ENCODE measurements at regions of chr12 and their contacts with region 1.

Region 1: DNA sequence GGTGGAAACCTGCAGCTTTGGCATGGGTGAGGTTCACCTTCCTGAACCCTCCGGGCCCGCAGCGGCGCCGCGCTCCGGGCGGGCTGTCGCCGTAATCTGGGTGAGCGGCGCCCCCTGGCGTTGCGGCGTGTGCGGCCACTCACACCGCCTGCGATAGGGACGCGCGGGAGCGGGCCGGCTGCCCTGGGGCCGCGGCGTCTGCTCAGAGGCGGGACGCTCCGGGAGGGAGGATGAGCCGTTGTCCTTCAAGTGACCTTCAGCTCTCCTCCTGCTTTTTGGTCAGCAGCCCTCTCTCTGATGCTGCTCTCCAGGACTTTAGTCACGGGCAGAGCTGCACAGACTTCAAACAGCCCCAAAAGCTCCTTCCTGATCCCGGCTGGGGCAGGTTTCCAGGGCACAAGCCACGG is 211.7 kb upstream of the FKBP4 start:
- DNase-seq: peak; percentile 82
- H3K4me3 ChIP-seq: peak overlapping the region in 1 of 4 donors; percentile 8
- H3K27ac ChIP-seq: peak overlapping the region in 3 of 4 donors; percentile 57 to 72 (median 71)
- H3K4me1 ChIP-seq: peaks cover 0 to 34% (median 23%) of the 10 kb centered on the region in 4 donors
- H3K27me3 ChIP-seq: no peaks in the 10 kb centered on the region
- CTCF ChIP-seq: peak; percentile 71 to 95 (median 86)
- EP300 ChIP-seq: no peak
- POLR2A ChIP-seq: no peak

Region 2: DNA sequence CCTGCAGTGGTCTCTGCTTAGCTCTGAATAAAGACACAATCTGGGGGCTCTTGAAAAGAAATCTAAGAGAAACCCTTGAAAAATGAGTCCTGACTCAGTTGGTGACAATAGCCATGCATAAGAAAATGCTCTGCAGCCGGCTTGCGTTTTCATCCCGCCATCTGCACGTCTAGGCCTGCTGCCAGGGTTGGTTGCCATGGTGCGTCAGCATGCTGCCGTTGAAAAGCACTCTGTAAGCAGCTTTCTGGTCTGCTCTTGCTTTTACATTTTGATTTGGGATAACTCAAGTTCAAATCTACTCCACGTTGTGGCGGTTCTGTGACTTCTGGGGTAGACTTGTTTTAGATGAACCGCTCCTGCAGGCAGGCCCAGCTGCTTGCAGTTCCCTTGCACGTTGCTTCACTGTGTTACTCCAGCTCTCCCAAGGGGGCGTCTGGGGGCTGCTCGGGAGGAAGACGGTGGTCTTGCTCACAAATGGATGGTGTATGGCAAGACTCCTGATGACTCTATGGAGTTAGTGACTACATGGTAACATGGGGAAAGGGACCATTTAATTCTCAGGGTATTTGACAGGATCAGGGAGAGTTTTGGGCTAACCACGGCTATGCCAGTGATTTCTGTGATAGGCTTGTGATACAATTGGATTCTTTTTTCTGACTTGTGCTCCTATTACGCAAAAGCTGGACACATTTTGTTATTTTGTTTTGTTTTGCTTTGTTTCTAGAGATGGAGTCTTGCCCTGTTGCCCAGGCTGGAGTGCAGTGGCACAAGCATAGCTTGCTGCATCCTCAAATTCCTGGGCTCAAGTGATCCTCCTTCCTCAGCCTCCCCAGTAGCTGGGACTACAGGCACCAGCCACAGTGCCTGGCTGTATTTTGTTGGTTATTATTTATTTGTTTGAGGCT is 938.3 kb before region 1 on chr12:
- intact Hi-C with region 1: loop called (anchors 10 kb)
- DNase-seq: peak; percentile 92
- H3K4me3 ChIP-seq: peak overlapping the region in 1 of 4 donors; percentile 8
- H3K27ac ChIP-seq: peak overlapping the region; percentile 42 to 77 (median 64)
- H3K4me1 ChIP-seq: peaks cover 0 to 82% (median 53%) of the 10 kb centered on the region in 4 donors
- H3K27me3 ChIP-seq: no peaks in the 10 kb centered on the region
- CTCF ChIP-seq: no peak
- EP300 ChIP-seq: no peak
- POLR2A ChIP-seq: no peak

Region 3: GRCh38 chr12:1804545-1805332 is 778.4 kb before region 1 on chr12:
- intact Hi-C with region 1: loop called (anchors 2 kb)
- DNase-seq: peak; percentile 93
- H3K4me3 ChIP-seq: no peak overlapping the region
- H3K27ac ChIP-seq: peak overlapping the region in 1 of 4 donors; percentile 27
- H3K4me1 ChIP-seq: peaks cover 0 to 12% (median 2%) of the 10 kb centered on the region in 4 donors
- H3K27me3 ChIP-seq: no peaks in the 10 kb centered on the region
- CTCF ChIP-seq: no peak
- EP300 ChIP-seq: no peak
- POLR2A ChIP-seq: no peak

Region 4: GRCh38 chr12:1939801-1940607 is 643.1 kb before region 1 on chr12:
- intact Hi-C with region 1: loop called (anchors 10 kb)
- DNase-seq: peak; percentile 92
- H3K4me3 ChIP-seq: peak overlapping the region in 2 of 4 donors; percentile 1 to 11
- H3K27ac ChIP-seq: peak overlapping the region; percentile 73 to 84 (median 79)
- H3K4me1 ChIP-seq: peaks cover 0 to 63% (median 52%) of the 10 kb centered on the region in 4 donors
- H3K27me3 ChIP-seq: no peaks in the 10 kb centered on the region
- CTCF ChIP-seq: peak; percentile 92 to 99 (median 94)
- EP300 ChIP-seq: no peak
- POLR2A ChIP-seq: no peak

Region 5: GRCh38 chr12:2273288-2273687 is 309.8 kb before region 1 on chr12:
- intact Hi-C with region 1: loop called (anchors 5 kb)
- DNase-seq: peak; percentile 85
- H3K4me3 ChIP-seq: no peak overlapping the region
- H3K27ac ChIP-seq: peak overlapping the region; percentile 22 to 84 (median 78)
- H3K4me1 ChIP-seq: peaks cover 0 to 62% (median 46%) of the 10 kb centered on the region in 4 donors
- H3K27me3 ChIP-seq: no peaks in the 10 kb centered on the region
- CTCF ChIP-seq: peak in 1 of 4 experiments; percentile 45
- EP300 ChIP-seq: no peak
- POLR2A ChIP-seq: no peak

Region 6: GRCh38 chr12:2382370-2383155 is 200.5 kb before region 1 on chr12:
- intact Hi-C with region 1: loop called (anchors 5 kb)
- DNase-seq: no peak
- H3K4me3 ChIP-seq: no peak overlapping the region
- H3K27ac ChIP-seq: peak overlapping the region; percentile 72 to 90 (median 84)
- H3K4me1 ChIP-seq: peaks cover 0 to 93% (median 84%) of the 10 kb centered on the region in 4 donors
- H3K27me3 ChIP-seq: no peaks in the 10 kb centered on the region
- CTCF ChIP-seq: no peak
- EP300 ChIP-seq: no peak
- POLR2A ChIP-seq: no peak

Measured in sigmoid colon (tissue), 7 donors.